ENCODE measurements at regions of chr16 and their contacts with region 1.

Region 1: GRCh38 chr16:1971796-1972489 is at the start of gene TBL3:
- DNase-seq: peak; percentile 96
- H3K4me3 Mint-ChIP-seq: peak within 1 kb of the TSS; percentile 91
- H3K27ac Mint-ChIP-seq: peak within 1 kb of the TSS; percentile 89
- H3K4me1 Mint-ChIP-seq: peaks cover 28% of the 10 kb centered on the region
- H3K27me3 Mint-ChIP-seq: no peaks in the 10 kb centered on the region
- total RNA-seq, gene TBL3: 36.5 to 38.0 TPM

Region 2: DNA sequence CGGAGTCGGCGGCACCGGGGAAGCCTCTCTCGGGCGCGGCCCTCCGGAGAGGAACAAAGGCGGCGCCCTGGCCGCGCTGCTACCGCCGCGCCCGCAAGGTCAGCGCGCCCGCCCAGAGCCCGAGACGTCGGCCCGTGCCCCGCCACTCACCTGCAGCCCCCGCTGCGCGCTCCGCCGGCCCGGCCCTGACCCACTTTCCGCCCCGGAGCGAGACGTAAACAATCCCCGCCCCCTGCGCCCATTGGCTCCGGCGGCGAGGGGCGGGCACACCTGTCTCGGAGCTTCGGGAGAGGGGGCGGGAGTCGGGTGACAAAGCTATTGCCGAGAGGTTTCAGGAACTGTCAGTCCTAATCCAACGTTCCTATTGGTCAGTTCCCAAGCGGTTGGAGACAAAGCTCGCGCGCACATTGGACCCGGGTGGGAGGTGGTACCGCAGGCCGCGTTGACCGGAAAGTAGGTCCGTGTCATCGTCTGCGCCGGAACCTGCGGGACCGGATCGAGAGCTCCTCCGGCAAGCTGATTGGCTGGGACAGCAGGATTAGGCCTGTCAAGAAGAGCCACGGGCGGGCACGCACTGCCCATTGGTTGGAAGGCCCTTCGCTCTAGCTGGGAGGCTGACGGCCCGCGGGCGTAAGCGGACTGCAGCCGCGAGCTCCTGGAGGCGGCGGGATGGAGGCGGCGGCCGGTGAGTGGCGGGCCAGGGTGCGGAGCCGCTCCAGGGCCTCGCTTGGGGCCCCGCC is 189.4 kb before region 1 on chr16 and contains the starts of genes NUBP2 and SPSB3:
- CTCF ChIA-PET with region 1: no interaction called
- intact Hi-C with region 1: loop called (anchors 1 kb)
- DNase-seq: peak; percentile 100
- H3K4me3 Mint-ChIP-seq: peak within 1 kb of the TSS; percentile 90
- H3K27ac Mint-ChIP-seq: peak within 1 kb of the TSS; percentile 73
- H3K4me1 Mint-ChIP-seq: peaks cover 28% of the 10 kb centered on the region
- H3K27me3 Mint-ChIP-seq: no peaks in the 10 kb centered on the region
- total RNA-seq, gene NUBP2: 37.9 to 42.4 TPM
- total RNA-seq, gene SPSB3: 14.0 to 17.0 TPM

Region 3: DNA sequence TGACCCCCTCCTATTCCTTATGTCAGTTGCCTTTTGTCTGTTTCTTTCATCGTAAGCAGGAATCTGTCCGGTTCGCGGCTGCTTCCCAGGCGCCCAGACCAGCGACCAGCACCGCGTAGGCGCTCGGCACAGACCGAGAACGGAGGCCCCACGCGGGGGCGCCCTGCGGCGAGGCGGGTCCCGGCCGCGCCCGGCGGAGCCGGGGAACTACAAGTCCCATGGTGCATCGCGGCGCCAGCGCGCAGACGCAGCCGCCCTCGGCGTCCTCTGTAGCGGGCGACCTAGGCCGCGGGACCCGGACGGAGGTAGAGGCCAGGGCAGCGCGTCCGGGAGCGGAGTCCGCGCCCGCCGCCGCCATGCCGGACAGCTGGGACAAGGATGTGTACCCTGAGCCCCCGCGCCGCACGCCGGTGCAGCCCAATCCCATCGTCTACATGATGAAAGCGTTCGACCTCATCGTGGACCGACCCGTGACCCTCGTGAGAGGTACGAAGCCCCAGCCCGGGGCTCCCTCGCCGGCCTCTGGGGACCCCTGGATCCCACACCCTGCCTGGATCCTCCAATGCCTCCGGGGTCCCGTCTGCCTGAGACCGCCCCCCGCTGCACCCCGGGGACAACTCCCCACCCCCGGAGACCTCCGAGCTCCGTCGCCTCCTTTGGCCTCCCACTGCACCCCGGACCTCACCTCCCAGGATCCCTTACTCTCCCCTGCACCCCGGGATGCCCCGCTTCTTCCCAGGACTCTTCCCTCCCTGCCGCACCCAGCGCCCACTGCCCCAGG is 12.5 kb before region 1 on chr16 and contains the start of gene NDUFB10:
- CTCF ChIA-PET with region 1: interaction called, 5 read pairs
- intact Hi-C with region 1: loop called (anchors 1 kb)
- DNase-seq: peak; percentile 91
- H3K4me3 Mint-ChIP-seq: peak within 1 kb of the TSS; percentile 96
- H3K27ac Mint-ChIP-seq: peak within 1 kb of the TSS; percentile 87
- H3K4me1 Mint-ChIP-seq: peaks cover 36% of the 10 kb centered on the region
- H3K27me3 Mint-ChIP-seq: no peaks in the 10 kb centered on the region
- total RNA-seq, gene NDUFB10: 111 TPM

Region 4: GRCh38 chr16:1983544-1984346 is 11.8 kb after region 1 on chr16 and contains the start of gene GFER:
- CTCF ChIA-PET with region 1: interaction called, 3 read pairs
- intact Hi-C with region 1: loop called (anchors 1 kb)
- DNase-seq: peak; percentile 74
- H3K4me3 Mint-ChIP-seq: peak within 1 kb of the TSS; percentile 80
- H3K27ac Mint-ChIP-seq: no peak within 1 kb of the TSS
- H3K4me1 Mint-ChIP-seq: peaks cover 10% of the 10 kb centered on the region
- H3K27me3 Mint-ChIP-seq: peaks cover 26% of the 10 kb centered on the region
- total RNA-seq, gene GFER: 29.8 to 30.1 TPM

Region 5: DNA sequence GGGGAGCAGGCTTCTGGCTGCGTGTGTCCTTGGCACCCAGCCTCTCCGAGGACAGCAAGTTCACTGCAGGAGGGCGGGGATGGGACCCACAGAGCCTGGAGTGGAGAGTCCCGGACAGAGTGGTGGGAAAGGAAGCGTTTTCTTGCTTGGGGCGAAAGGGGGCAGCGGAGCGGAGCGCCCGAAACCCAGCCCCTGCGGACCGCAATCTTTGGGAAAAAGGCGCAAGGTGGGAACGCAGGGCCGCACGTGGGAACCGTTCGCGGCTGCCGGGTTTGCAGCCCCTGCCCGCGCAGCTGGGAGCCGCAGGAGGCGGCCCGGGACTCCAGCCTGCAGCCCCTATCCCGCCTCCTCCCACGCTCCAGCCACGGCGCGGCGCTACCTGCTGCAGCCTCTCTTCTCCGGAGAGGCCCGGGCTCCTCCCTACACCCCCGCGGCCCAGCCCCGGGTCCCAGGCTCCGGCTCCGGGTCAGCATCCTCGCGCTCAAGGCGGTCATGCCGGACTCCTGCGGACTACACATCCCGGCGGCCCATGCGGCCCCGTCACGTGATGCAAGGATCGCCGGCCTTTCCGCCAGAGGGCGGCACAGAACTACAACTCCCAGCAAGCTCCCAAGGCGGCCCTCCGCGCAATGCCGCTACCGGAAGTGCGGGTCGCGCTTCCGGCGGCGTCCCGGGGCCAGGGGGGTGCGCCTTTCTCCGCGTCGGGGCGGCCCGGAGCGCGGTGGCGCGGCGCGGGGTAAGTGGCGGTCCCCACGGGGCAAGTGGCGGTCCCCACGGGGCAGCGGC is 75.6 kb after region 1 on chr16 and contains the starts of genes NTHL1 and TSC2:
- CTCF ChIA-PET with region 1: no interaction called
- intact Hi-C with region 1: loop called (anchors 2 kb)
- DNase-seq: peak; percentile 95
- H3K4me3 Mint-ChIP-seq: peak within 1 kb of the TSS; percentile 93
- H3K27ac Mint-ChIP-seq: peak within 1 kb of the TSS; percentile 61
- H3K4me1 Mint-ChIP-seq: peaks cover 16% of the 10 kb centered on the region
- H3K27me3 Mint-ChIP-seq: no peaks in the 10 kb centered on the region
- total RNA-seq, gene NTHL1: 20.1 to 24.1 TPM
- total RNA-seq, gene TSC2: 72.3 to 72.7 TPM

Region 6: DNA sequence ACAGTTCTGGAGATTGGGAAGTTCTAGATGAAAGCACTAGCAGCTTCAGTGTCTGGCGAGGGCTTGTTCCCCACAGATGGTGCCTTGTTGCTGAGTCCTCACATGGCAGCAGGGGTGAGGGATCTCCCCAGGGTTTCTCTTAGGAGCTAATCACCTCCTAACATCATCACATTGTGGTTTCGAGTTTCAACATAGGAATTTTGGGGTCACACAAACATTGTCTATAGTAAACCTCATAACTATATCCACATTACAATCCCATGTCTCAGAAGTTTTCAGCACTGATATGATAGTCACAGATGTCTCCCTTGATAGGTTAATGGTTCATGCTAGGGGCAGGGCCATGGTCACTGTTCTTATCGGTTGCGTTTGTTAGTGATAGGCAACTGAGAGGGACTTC is 1542.7 kb after region 1 on chr16:
- CTCF ChIA-PET with region 1: no interaction called
- intact Hi-C with region 1: no loop called
- DNase-seq: no peak
- H3K4me3 Mint-ChIP-seq: no peak overlapping the region
- H3K27ac Mint-ChIP-seq: peak overlapping the region; percentile 77
- H3K4me1 Mint-ChIP-seq: peaks cover 33% of the 10 kb centered on the region
- H3K27me3 Mint-ChIP-seq: no peaks in the 10 kb centered on the region